Breast epithelium (tissue), 4 donors: ENCODE measurements at regions of chr16 and their contacts with region 1.

Region 1: GRCh38 chr16:65876056-65876408 is 490.5 kb upstream of the CDH5 start:
- DNase-seq: no peak
- H3K4me3 ChIP-seq: no peak overlapping the region
- H3K27ac ChIP-seq: no peak overlapping the region
- H3K4me1 ChIP-seq: no peaks in the 10 kb centered on the region
- H3K27me3 ChIP-seq: no peaks in the 10 kb centered on the region
- CTCF ChIP-seq: no peak
- POLR2A ChIP-seq: no peak

Region 2: GRCh38 chr16:64687786-64688185 is 1188.2 kb before region 1 on chr16:
- intact Hi-C with region 1: loop called (anchors 5 kb)
- DNase-seq: no peak
- H3K4me3 ChIP-seq: no peak overlapping the region
- H3K27ac ChIP-seq: no peak overlapping the region
- H3K4me1 ChIP-seq: no peaks in the 10 kb centered on the region
- H3K27me3 ChIP-seq: no peaks in the 10 kb centered on the region
- CTCF ChIP-seq: no peak
- POLR2A ChIP-seq: no peak

Region 3: GRCh38 chr16:65229191-65229662 is 646.8 kb before region 1 on chr16:
- intact Hi-C with region 1: no loop called
- DNase-seq: no peak
- H3K4me3 ChIP-seq: no peak overlapping the region
- H3K27ac ChIP-seq: no peak overlapping the region
- H3K4me1 ChIP-seq: no peaks in the 10 kb centered on the region
- H3K27me3 ChIP-seq: no peaks in the 10 kb centered on the region
- CTCF ChIP-seq: no peak
- POLR2A ChIP-seq: no peak

Region 4: GRCh38 chr16:65855171-65856145 is 20.6 kb before region 1 on chr16:
- intact Hi-C with region 1: loop called (anchors 1 kb)
- DNase-seq: no peak
- H3K4me3 ChIP-seq: no peak overlapping the region
- H3K27ac ChIP-seq: no peak overlapping the region
- H3K4me1 ChIP-seq: no peaks in the 10 kb centered on the region
- H3K27me3 ChIP-seq: no peaks in the 10 kb centered on the region
- CTCF ChIP-seq: no peak
- POLR2A ChIP-seq: no peak